ENCODE measurements at regions of chr12 and their contacts with region 1.

Region 1: DNA sequence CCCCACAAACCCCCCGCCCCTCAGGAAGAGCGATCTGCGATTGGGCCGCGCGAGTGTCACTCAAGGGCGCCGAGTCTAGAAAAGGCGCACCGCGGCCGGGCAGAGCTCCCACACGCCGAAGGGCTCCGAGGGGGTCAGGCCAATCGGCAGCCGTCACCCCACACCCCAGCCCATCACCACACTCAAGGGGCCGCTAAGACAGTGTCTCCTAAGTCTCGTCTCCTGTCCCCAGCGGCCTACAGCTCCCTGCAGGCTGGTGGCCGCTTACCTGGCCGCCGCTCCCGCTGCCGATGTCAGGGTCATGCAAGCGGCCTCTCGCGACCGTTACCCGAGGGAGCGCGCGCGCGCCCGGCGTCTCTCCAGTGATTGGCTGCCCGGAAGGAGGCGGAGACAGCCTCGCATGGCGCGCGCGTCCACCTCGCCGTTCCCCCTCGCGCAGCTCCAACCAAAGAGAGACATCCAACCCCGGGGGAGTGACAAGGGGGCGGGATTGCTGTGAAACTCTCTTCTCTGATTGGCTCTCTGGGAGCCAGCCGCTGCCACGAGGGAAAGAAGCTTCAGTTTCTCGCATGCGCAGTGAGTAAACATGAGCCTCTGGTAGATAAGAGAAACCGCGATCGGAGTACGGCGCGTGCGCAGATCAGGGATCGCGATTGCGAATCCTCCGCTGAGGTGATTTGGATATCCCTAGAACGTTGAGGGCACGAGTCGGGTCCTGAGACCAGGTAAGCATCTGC is at the starts of genes MPHOSPH9 and MTRFR:
- DNase-seq: peak; percentile 98 to 99 (median 99)
- ATAC-seq: peak; percentile 99
- H3K4me3 ChIP-seq: peak within 1 kb of the TSS; percentile 42 to 97 (median 86)
- H3K27ac ChIP-seq: peak within 1 kb of the TSS; percentile 70 to 96 (median 92)
- H3K4me1 ChIP-seq: peaks cover 0 to 63% (median 28%) of the 10 kb centered on the region in 12 donors
- H3K27me3 ChIP-seq: no peaks in the 10 kb centered on the region
- CTCF ChIP-seq: no peak
- POLR2A ChIP-seq: peak; percentile 98 to 100
- total RNA-seq, gene MPHOSPH9: 17.7 to 32.3 (median 23.4) TPM
- total RNA-seq, gene MTRFR: 7.9 to 13.3 (median 11.3) TPM

Region 2: DNA sequence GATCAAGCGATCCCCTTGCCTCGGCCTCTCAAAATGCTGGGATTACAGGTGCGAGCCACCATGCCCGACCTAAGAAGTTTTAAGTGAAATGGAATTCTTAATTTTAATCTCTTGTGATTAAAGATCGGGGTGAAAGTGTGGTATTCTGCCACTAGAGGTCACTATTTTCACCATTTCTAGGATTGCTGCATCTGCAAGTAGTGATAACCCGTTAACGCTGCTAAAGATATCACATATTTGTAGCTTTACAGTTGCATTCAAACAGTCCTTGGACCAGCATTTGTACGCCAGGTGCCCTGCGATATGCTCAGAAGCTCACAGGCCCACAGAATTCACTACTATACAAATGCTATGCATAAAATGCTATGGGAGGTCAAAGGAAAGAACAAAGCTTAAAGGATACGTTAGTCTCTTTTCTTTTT is 439.3 kb before region 1 on chr12:
- intact Hi-C with region 1: loop called in 2 of 10 experiments (anchors 10 kb)
- DNase-seq: no peak
- ATAC-seq: peak in 2 of 4 donors; percentile 54 to 63
- H3K4me3 ChIP-seq: no peak overlapping the region
- H3K27ac ChIP-seq: no peak overlapping the region
- H3K4me1 ChIP-seq: peaks cover 0 to 3% (median 0%) of the 10 kb centered on the region in 12 donors
- H3K27me3 ChIP-seq: no peaks in the 10 kb centered on the region
- CTCF ChIP-seq: peak; percentile 65 to 83 (median 76)
- POLR2A ChIP-seq: no peak

Region 3: DNA sequence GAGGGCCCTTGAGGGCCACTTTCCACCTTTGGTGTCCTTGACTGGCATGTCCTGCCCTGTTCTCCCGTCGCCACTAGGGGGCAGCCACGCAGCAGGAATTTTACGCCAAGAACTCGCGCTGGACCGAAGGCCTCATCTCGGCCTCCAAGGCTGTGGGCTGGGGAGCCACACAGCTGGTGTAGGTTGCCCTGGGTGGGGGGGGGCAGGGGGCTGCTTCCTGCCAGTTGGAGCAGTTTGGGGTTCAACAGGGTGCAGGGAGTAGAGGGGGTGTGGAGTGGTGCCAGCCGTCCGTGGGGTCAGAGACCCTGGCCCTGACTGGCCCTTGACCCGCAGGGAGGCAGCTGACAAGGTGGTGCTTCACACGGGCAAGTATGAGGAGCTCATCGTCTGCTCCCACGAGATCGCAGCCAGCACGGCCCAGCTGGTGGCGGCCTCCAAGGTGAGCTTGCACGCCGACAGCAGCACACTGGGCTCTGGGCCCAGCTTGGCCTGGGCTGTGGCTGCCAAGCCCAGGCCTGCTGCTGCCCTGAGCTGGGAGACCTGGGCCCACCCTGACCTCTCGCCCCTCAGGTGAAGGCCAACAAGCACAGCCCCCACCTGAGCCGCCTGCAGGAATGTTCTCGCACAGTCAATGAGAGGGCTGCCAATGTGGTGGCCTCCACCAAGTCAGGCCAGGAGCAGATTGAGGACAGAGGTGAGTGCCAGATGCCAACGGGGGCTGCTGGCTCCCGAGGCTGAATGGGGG is 372.5 kb before region 1 on chr12:
- intact Hi-C with region 1: loop called in 5 of 10 experiments (anchors 5 to 10 kb)
- DNase-seq: peak; percentile 85 to 92 (median 87)
- ATAC-seq: peak; percentile 56 to 80 (median 72)
- H3K4me3 ChIP-seq: no peak overlapping the region
- H3K27ac ChIP-seq: peak overlapping the region in 9 of 12 donors; percentile 21 to 72 (median 49)
- H3K4me1 ChIP-seq: peaks cover 0 to 48% (median 25%) of the 10 kb centered on the region in 12 donors
- H3K27me3 ChIP-seq: no peaks in the 10 kb centered on the region
- CTCF ChIP-seq: peak; percentile 83 to 95 (median 88)
- POLR2A ChIP-seq: no peak

Region 4: DNA sequence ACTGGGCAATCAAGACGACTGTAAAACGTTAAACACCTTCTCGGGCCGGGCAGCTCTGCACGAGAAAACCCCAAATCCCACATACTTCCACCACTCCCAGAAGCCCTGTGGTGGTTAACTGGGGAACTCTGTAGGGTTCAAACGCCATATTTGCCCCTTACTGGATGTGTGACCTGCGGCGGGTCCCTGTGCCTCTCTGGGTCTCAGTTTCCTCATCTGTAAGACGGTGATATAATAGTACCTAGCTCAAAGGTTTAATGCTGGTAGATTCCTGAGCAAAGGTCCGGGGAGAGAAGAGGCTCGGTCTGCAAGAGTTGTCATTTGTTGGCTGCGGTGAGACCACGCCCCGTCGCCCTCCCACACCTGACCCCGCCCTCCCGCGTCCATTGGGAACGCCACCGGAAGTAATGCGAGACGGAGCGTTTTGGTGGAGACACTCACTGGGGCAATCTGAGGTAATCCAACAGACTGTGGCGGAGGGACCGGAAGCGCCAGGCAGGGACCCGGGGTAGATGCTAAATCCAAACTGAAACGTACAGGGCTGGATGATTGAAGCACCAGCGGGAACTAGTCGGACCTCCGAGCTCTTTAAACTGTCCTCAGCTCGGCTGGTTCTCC is 258.6 kb before region 1 on chr12:
- intact Hi-C with region 1: loop called in 3 of 10 experiments (anchors 2 to 5 kb)
- DNase-seq: peak; percentile 98 to 99 (median 98)
- ATAC-seq: peak; percentile 95 to 97 (median 96)
- H3K4me3 ChIP-seq: peak overlapping the region; percentile 69 to 100 (median 90)
- H3K27ac ChIP-seq: peak overlapping the region; percentile 90 to 100 (median 98)
- H3K4me1 ChIP-seq: peaks cover 9 to 37% (median 26%) of the 10 kb centered on the region in 12 donors
- H3K27me3 ChIP-seq: no peaks in the 10 kb centered on the region
- CTCF ChIP-seq: no peak
- POLR2A ChIP-seq: no peak

Region 5: DNA sequence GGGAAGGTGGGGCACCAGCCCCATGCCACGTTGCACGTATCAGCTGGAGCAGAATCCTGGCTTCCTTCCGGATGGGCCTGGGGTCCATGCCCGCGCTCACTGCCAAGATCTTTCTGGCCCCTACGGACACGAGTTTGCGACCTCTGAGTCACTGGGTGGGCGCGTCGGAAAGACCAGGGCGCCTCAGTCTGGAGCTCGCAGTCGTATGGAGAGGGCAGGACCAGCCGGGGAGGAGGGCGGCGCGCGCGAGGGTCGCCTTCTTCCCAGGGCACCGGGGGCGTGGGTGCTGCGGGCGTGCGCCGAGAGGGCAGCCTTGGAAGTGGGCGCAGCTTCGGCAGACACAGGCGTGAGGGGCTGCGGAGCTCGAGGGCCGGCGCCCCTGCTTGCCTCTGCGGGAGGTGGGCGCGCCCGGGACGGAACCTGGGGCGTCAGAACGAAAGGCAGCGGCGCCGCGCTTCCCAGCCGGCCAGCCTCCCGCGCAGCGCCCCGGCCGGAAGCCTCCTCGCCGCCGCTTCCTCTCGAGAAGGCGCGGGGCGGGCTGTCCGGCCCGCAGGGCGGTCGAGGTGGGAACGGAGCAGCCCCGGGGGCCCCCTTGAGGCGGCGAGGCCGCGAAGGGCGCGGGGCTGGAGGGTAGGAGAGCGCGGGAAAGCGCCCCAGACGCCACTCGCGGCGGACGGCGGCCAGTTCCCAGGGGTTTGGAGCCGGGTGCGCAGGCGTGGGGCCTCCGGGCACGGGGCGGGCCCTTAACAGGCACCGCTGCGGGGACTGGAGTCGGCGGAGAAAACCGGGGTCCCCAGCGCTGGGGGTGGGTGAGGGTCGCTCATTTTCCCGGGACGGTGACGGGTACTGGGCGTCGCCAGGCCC is 252.6 kb before region 1 on chr12 and contains the start of gene ARL6IP4:
- intact Hi-C with region 1: loop called in 9 of 10 experiments (anchors 2 to 10 kb)
- DNase-seq: peak; percentile 72 to 86 (median 73)
- ATAC-seq: peak; percentile 15 to 77 (median 68)
- H3K4me3 ChIP-seq: peak within 1 kb of the TSS; percentile 85 to 100 (median 98)
- H3K27ac ChIP-seq: peak within 1 kb of the TSS; percentile 69 to 97 (median 94)
- H3K4me1 ChIP-seq: peaks cover 20 to 82% (median 71%) of the 10 kb centered on the region in 12 donors
- H3K27me3 ChIP-seq: no peaks in the 10 kb centered on the region
- CTCF ChIP-seq: peak in 4 of 12 donors; percentile 10 to 25 (median 18)
- POLR2A ChIP-seq: peak in 1 of 2 donors; percentile 75
- total RNA-seq, gene ARL6IP4: 123 to 236 (median 140) TPM

Region 6: DNA sequence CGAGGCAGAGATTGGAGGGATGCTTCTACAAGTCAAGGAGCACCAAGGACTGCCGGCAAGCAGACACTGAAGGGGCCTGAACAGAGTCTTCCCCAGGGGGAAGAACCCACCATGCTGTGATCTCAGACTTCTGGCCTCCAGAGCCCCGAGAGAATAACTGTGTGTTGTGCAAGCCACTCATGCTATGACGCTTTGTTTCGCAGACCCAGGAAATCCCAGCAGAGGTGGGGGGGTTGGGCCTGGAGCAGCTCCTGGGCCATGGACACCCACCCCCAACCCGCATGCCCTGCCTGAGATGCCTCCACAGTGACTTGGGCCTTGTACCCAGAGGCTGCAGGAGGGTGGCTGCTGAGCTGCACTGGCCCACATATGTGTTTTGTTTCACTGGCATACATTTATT is 221.3 kb before region 1 on chr12:
- intact Hi-C with region 1: no loop called
- DNase-seq: no peak
- ATAC-seq: no peak
- H3K4me3 ChIP-seq: no peak overlapping the region
- H3K27ac ChIP-seq: no peak overlapping the region
- H3K4me1 ChIP-seq: no peaks in the 10 kb centered on the region
- H3K27me3 ChIP-seq: no peaks in the 10 kb centered on the region
- CTCF ChIP-seq: no peak
- POLR2A ChIP-seq: no peak

Region 7: DNA sequence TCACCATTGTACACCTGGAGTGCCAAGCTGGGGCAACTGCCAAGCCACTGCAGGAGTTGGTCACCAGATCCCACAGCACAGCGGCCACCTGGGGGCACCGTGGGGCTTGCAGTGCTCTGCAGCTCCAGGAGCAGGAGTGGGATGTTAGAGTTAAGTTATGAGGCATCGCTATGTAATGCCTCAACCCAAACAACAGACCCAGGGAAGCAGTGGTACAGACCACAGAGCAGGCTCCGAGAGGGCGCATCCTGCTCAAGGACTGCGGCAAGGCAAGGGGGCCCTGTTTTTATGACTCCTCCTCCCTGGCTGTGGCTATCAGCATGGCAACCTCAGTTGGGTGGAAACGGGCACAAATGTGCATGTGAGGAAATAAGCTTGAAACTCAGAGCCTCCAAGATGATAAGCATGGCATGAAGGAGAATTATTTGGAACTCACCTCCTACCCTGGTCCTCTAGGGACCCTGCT is 189.4 kb before region 1 on chr12:
- intact Hi-C with region 1: loop called (anchors 2 to 10 kb)
- DNase-seq: peak; percentile 80 to 91 (median 89)
- ATAC-seq: peak; percentile 87 to 94 (median 92)
- H3K4me3 ChIP-seq: no peak overlapping the region
- H3K27ac ChIP-seq: peak overlapping the region in 7 of 12 donors; percentile 3 to 75 (median 35)
- H3K4me1 ChIP-seq: peaks cover 2 to 59% (median 27%) of the 10 kb centered on the region in 12 donors
- H3K27me3 ChIP-seq: no peaks in the 10 kb centered on the region
- CTCF ChIP-seq: peak; percentile 49 to 86 (median 72)
- POLR2A ChIP-seq: no peak

Region 8: GRCh38 chr12:123200414-123200813 is 32.6 kb before region 1 on chr12:
- intact Hi-C with region 1: no loop called
- DNase-seq: no peak
- ATAC-seq: no peak
- H3K4me3 ChIP-seq: no peak overlapping the region
- H3K27ac ChIP-seq: no peak overlapping the region
- H3K4me1 ChIP-seq: no peaks in the 10 kb centered on the region
- H3K27me3 ChIP-seq: no peaks in the 10 kb centered on the region
- CTCF ChIP-seq: no peak
- POLR2A ChIP-seq: no peak

Region 9: GRCh38 chr12:123364532-123365024 is 131.6 kb after region 1 on chr12 and contains the start of gene SBNO1:
- intact Hi-C with region 1: no loop called
- DNase-seq: peak; percentile 92 to 94 (median 93)
- ATAC-seq: peak; percentile 86 to 91 (median 90)
- H3K4me3 ChIP-seq: peak within 1 kb of the TSS; percentile 67 to 98 (median 87)
- H3K27ac ChIP-seq: peak within 1 kb of the TSS; percentile 82 to 99 (median 95)
- H3K4me1 ChIP-seq: peaks cover 4 to 38% (median 23%) of the 10 kb centered on the region in 12 donors
- H3K27me3 ChIP-seq: no peaks in the 10 kb centered on the region
- CTCF ChIP-seq: no peak
- POLR2A ChIP-seq: peak in 1 of 2 donors; percentile 70
- total RNA-seq, gene SBNO1: 17.2 to 33.8 (median 27.9) TPM

Region 10: DNA sequence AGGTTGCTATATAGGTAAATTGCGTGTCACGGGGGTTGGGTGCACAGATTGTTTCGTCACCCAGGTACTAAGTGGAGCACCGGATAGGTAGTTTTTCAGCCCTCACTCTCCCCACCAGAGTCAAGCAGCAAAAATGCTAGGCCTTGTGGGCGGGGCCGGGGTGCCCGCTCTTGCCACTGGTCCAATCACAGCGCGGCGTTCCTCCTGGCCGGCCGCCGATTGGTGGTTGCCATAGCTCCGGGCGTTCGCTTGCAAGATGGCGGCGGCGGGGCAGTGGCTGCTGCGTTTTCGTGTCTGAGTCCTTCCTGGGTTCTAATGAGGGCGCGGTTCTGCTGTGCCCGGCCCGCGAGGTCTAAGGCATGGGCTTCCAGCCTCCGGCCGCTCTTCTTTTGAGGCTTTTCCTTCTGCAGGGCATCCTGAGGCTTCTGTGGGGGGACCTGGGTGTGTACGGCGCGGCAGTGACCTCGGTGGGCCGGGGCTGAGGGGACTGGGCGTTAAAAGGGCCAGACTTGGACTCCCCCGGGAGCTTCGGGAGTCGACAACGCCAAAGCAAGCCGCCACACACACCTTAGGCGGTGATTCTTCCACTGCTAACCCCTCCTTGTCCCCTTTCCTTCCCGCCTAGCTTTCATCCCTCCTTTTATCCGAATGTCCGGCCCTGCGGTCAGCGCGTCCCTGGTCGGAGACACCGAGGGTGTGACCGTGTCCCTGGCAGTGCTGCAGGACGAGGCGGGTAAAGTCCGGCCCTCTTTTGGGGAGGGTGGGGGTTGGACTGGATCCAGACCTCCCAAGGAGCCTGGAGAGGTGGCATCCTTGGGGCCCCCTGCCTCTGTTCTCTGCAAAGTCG is 438.1 kb after region 1 on chr12 and contains the start of gene TCTN2:
- intact Hi-C with region 1: no loop called
- DNase-seq: peak; percentile 94 to 97 (median 96)
- ATAC-seq: peak; percentile 99 to 100 (median 100)
- H3K4me3 ChIP-seq: peak within 1 kb of the TSS; percentile 61 to 97 (median 92)
- H3K27ac ChIP-seq: peak within 1 kb of the TSS in 4 of 12 donors; percentile 36 to 63 (median 50)
- H3K4me1 ChIP-seq: peaks cover 0 to 14% (median 9%) of the 10 kb centered on the region in 12 donors
- H3K27me3 ChIP-seq: no peaks in the 10 kb centered on the region
- CTCF ChIP-seq: no peak
- POLR2A ChIP-seq: no peak
- total RNA-seq, gene TCTN2: 3.5 to 5.7 (median 4.5) TPM

Measured in heart left ventricle (tissue), 16 donors.